HCT116 (cell line): ENCODE measurements at regions of chr9 and their contacts with region 1.

Region 1: DNA sequence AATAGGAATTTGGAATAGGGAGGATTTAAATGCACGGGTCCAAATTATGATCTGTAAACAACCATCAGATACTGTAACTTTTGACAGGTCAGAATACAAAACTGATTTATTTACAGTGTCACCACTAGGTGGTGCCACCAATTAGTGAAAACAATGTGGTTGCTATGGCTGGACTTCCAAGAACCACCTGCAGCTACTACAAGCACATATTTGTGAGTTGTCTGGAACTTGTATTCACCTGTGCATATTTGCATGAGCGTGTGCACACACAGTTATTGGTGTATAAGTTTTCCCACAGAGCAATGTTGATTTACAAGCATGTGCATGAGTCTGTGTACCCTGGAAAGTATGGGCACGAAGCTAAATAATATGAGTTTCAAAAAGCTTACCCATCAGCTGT is 3.0 kb upstream of the HRCT1 start:
- DNase-seq: peak; percentile 48
- ATAC-seq: peak; percentile 35; the same call in 1 of the 2 replicates
- H3K4me3 ChIP-seq: no peak overlapping the region
- H3K27ac ChIP-seq: no peak overlapping the region
- H3K4me1 ChIP-seq: peaks cover 32 to 44% of the 10 kb centered on the region in 2 experiments
- H3K27me3 ChIP-seq: no peaks in the 10 kb centered on the region
- CTCF ChIP-seq: peak in 2 of 3 experiments; percentile 51 to 78; a peak in 4 of 6 replicates
- POLR2A ChIP-seq: no peak
- RAD21 ChIP-seq: no peak

Region 2: GRCh38 chr9:35603987-35604577 is 299.0 kb before region 1 on chr9:
- CTCF ChIA-PET with region 1: no interaction called
- POLR2A ChIA-PET with region 1: no interaction called
- RAD21 ChIA-PET with region 1: no interaction called
- intact Hi-C with region 1: no loop called
- DNase-seq: peak; percentile 99
- ATAC-seq: peak; percentile 89
- H3K4me3 ChIP-seq: peak overlapping the region; percentile 76 to 85
- H3K27ac ChIP-seq: peak overlapping the region; percentile 78
- H3K4me1 ChIP-seq: peaks cover 15 to 31% of the 10 kb centered on the region in 2 experiments; a peak in 3 of 4 replicates
- H3K27me3 ChIP-seq: no peaks in the 10 kb centered on the region
- CTCF ChIP-seq: peak in 2 of 3 experiments; percentile 84 to 87; a peak in 4 of 6 replicates
- POLR2A ChIP-seq: peak; percentile 73
- RAD21 ChIP-seq: no peak

Region 3: DNA sequence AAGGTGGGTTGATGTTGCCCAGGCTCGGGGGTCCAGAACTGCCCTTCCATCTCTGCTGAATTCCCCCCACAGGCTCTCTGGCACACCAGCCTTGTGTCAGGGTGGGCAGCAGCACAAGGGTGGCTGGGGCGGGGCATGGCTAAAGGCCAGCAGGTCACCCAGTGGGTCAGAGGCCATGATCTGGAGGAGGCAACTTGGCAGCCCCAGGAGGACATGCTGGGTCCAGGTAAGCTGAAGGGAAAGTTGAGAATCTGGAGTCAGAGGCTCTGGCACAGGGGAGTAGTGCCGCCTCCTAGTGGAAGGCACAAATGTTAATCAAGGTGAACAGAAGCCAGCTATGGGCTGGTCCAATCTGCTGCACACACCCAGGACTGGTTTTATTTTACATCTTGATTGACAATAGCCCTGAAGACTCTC is 67.8 kb before region 1 on chr9:
- CTCF ChIA-PET with region 1: interaction called, 5 read pairs
- POLR2A ChIA-PET with region 1: no interaction called
- RAD21 ChIA-PET with region 1: no interaction called
- intact Hi-C with region 1: loop called (anchors 2 kb)
- DNase-seq: no peak
- ATAC-seq: peak; percentile 87
- H3K4me3 ChIP-seq: no peak overlapping the region
- H3K27ac ChIP-seq: no peak overlapping the region
- H3K4me1 ChIP-seq: peaks cover 0 to 11% of the 10 kb centered on the region in 2 experiments; a peak in 1 of 4 replicates
- H3K27me3 ChIP-seq: no peaks in the 10 kb centered on the region
- CTCF ChIP-seq: peak; percentile 22 to 54 (median 48); a peak in 5 of 6 replicates
- POLR2A ChIP-seq: no peak
- RAD21 ChIP-seq: no peak; the same call in 1 of the 2 replicates

Region 4: DNA sequence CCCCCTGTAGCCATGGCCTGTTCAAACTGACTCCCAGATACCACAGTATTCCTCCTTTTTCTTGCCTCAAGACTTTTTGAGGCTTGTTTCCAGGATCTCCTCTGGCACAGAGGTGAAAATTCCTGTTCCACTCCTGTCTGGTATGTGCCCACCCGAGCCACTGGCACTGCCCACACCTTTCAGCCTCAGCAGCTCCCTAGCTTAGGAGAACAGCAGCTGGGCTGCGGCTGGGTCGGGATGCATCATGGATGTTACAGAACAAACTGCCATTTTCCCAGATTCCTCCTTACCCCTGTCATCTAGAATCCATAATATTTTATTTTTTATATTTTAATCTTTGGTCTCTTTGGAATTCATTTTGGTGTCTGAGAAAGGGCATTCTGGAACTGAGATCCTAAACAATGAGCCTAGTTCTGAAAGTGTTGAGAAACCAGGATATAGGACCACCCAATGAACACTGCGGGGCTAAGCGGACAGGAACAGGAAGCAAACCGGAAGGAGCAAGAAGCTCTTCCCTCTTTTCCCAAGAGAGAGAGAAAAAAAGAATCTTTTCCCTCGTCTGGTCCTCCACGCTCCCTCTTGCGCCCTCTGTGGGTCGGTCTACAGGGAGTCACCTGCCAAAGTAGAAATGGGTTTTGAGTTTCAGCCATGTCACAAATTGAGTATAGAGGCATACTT is 42.4 kb after region 1 on chr9:
- CTCF ChIA-PET with region 1: interaction called, 11 read pairs
- POLR2A ChIA-PET with region 1: no interaction called
- RAD21 ChIA-PET with region 1: no interaction called
- intact Hi-C with region 1: no loop called
- DNase-seq: peak; percentile 81
- ATAC-seq: peak; percentile 89
- H3K4me3 ChIP-seq: peak overlapping the region; percentile 54 to 61
- H3K27ac ChIP-seq: peak overlapping the region; percentile 0; the same call in 1 of the 2 replicates
- H3K4me1 ChIP-seq: peaks cover 9 to 27% of the 10 kb centered on the region in 2 experiments; a peak in 3 of 4 replicates
- H3K27me3 ChIP-seq: no peaks in the 10 kb centered on the region
- CTCF ChIP-seq: peak; percentile 84 to 96 (median 88)
- POLR2A ChIP-seq: peak; percentile 20
- RAD21 ChIP-seq: peak; percentile 63